ENCODE measurements at regions of chr4 and their contacts with region 1.

Region 1: DNA sequence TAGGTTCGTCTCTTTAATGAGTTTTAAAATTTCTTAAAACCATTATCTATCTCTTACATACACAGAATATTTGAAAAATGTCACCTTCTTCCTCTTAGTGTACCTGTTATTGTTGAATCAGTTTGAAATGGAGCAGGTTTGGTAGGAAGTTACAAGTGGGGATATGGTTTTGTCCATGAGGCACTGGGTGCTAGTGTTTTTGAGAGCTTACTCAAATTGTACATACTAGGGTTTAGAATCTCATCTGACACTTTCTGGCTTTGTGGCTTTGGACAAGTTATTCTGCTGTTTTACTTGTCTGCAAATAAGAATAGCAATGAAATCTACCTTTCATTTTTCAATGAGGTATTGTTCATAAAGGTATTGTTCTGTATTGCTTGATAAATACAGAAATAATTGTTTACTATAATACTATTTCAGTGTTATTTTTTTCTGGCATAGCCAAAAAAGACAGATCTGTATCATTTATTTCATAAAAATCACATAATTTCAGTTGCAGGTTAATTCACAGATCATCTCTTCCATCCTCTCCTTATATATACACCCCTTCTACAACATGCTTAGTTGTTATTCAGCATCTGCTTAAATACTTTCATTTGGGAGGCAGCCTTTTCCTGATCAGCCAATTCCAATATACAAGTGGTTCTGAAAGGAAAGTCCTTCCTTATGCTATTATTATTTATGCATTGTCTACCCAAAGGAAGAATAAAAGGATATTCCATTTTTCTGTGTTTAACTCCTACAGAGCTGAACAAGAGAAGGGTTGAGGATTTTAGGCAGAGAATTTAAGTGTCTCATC is 13.3 kb downstream of the NCAPG start:
- DNase-seq: no peak
- H3K4me3 ChIP-seq: no peak overlapping the region
- H3K27ac ChIP-seq: no peak overlapping the region
- H3K4me1 ChIP-seq: no peaks in the 10 kb centered on the region
- H3K27me3 ChIP-seq: no peaks in the 10 kb centered on the region
- CTCF ChIP-seq: no peak

Region 2: DNA sequence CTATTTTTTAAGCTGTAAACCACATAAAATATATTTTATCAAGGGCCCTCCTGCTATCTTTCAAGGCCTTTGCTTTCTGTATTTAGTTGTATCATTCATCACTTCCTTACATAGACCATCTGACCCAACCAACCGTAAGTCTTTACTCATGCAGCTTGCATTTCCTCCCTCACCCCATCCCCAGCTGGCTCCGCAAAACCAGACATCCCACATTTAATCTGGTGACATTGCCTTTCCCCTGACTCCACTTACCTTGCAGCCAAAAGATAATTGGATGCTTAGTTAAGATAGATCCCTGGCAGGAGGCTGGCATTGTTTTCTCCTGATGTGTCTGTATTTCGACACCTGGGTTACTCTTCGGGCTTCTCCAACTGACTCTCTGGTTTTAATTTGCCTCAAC is 741.9 kb before region 1 on chr4:
- intact Hi-C with region 1: no loop called
- DNase-seq: no peak
- H3K4me3 ChIP-seq: no peak overlapping the region
- H3K27ac ChIP-seq: no peak overlapping the region
- H3K4me1 ChIP-seq: no peaks in the 10 kb centered on the region
- H3K27me3 ChIP-seq: no peaks in the 10 kb centered on the region
- CTCF ChIP-seq: no peak

Region 3: GRCh38 chr4:17670423-17670822 is 153.6 kb before region 1 on chr4:
- intact Hi-C with region 1: no loop called
- DNase-seq: no peak
- H3K4me3 ChIP-seq: no peak overlapping the region
- H3K27ac ChIP-seq: no peak overlapping the region
- H3K4me1 ChIP-seq: no peaks in the 10 kb centered on the region
- H3K27me3 ChIP-seq: peaks cover 12% of the 10 kb centered on the region
- CTCF ChIP-seq: no peak

Region 4: GRCh38 chr4:18366892-18367291 is 542.8 kb after region 1 on chr4:
- intact Hi-C with region 1: loop called (anchors 10 kb)
- DNase-seq: no peak
- H3K4me3 ChIP-seq: no peak overlapping the region
- H3K27ac ChIP-seq: no peak overlapping the region
- H3K4me1 ChIP-seq: no peaks in the 10 kb centered on the region
- H3K27me3 ChIP-seq: no peaks in the 10 kb centered on the region
- CTCF ChIP-seq: peak; percentile 53

Region 5: GRCh38 chr4:18578307-18578706 is 754.2 kb after region 1 on chr4:
- intact Hi-C with region 1: loop called (anchors 10 kb)
- DNase-seq: no peak
- H3K4me3 ChIP-seq: no peak overlapping the region
- H3K27ac ChIP-seq: no peak overlapping the region
- H3K4me1 ChIP-seq: no peaks in the 10 kb centered on the region
- H3K27me3 ChIP-seq: peaks cover 16% of the 10 kb centered on the region
- CTCF ChIP-seq: no peak